Posterior vena cava (tissue), 2 donors: ENCODE measurements at regions of chr10 and their contacts with region 1.

Region 1: GRCh38 chr10:89256340-89256739 is 4.8 kb upstream of the LIPA start:
- DNase-seq: no peak

Region 2: GRCh38 chr10:89369156-89370105 is 113.1 kb after region 1 on chr10:
- intact Hi-C with region 1: loop called in 1 of 2 experiments (anchors 5 kb)
- DNase-seq: no peak